ENCODE measurements at regions of chr19 and their contacts with region 1.

Region 1: GRCh38 chr19:51441410-51442390 is 16.6 kb downstream of the SIGLEC8 start:
- DNase-seq: peak; percentile 87
- H3K4me3 Mint-ChIP-seq: peak overlapping the region; percentile 88
- H3K27ac Mint-ChIP-seq: peak overlapping the region; percentile 91
- H3K4me1 Mint-ChIP-seq: peaks cover 68% of the 10 kb centered on the region
- H3K27me3 Mint-ChIP-seq: no peaks in the 10 kb centered on the region

Region 2: GRCh38 chr19:51259348-51260245 is 182.1 kb before region 1 on chr19:
- intact Hi-C with region 1: loop called (anchors 2 kb)
- DNase-seq: peak; percentile 61
- H3K4me3 Mint-ChIP-seq: no peak overlapping the region
- H3K27ac Mint-ChIP-seq: no peak overlapping the region
- H3K4me1 Mint-ChIP-seq: peaks cover 44% of the 10 kb centered on the region
- H3K27me3 Mint-ChIP-seq: peaks cover 26% of the 10 kb centered on the region

Region 3: DNA sequence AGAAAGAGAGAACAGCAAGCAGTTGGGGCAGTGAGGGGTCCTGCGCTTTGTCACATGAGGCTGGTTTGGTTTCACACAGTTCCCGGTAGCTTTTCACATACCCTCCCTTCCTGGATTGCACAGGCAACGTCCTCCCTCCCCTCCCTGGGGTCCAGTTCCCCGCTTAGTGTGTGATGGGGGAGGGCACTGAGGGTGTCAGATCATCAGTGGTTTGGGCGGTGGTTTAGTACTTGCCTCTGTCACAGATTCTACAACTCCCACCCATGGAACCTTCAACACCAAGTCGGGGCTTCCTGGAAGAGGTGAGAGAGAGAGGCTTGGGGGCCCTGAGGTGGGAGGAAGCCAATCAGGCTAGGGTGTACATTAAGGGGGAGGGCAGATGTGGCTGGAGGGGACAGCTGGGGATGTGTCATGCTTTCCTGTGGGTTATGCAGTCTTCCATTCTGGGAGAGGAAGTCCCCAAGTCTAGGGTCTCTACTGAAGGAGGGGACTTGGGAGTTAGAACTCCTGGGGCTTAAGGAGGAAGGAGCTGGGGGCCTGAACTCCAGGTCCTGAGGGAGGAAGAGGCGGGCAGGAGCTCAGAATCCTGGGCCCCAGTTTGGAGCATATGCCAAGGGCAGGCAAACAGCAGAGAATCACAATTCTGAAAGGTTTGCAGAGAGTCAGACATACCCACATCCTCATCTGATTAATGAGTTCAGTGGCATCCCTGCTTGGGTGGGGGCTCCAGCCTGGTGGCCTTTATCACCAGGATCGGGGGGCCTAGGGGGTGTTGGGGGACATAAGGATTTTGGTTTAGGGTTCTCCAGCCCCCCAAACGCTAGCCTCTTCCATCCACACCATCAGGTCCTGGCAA is 68.8 kb before region 1 on chr19 and contains the start of gene NKG7:
- intact Hi-C with region 1: loop called (anchors 2 kb)
- DNase-seq: peak; percentile 72
- H3K4me3 Mint-ChIP-seq: peak within 1 kb of the TSS; percentile 84
- H3K27ac Mint-ChIP-seq: peak within 1 kb of the TSS; percentile 94
- H3K4me1 Mint-ChIP-seq: peaks cover 65% of the 10 kb centered on the region
- H3K27me3 Mint-ChIP-seq: no peaks in the 10 kb centered on the region
- total RNA-seq, gene NKG7: 332 and 342 TPM in 2 replicates

Region 4: DNA sequence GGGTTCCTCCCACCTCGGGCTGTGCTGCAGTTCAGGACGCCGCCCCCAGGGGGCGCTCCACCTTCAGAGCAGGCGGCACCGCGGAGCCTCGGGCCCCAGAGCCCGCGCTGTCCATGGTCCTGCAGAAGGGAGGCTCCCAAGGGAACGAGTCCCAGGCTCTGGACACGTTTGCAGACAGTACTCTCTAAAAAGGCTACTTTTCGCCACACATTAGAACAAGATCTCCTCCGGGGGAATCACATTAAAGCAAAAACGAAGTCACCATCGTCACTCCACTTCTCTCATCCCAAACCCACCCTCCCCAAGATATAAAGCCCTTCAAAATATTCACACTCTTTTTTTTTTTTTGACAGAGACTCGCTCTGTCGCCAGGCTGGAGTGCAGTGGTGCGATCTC is 19.6 kb before region 1 on chr19:
- intact Hi-C with region 1: loop called (anchors 2 kb)
- DNase-seq: peak; percentile 80
- H3K4me3 Mint-ChIP-seq: peak overlapping the region; percentile 26
- H3K27ac Mint-ChIP-seq: no peak overlapping the region
- H3K4me1 Mint-ChIP-seq: peaks cover 22% of the 10 kb centered on the region
- H3K27me3 Mint-ChIP-seq: no peaks in the 10 kb centered on the region

Region 5: GRCh38 chr19:51489113-51489512 is 47.4 kb after region 1 on chr19:
- intact Hi-C with region 1: loop called (anchors 1 kb)
- DNase-seq: no peak
- H3K4me3 Mint-ChIP-seq: peak overlapping the region; percentile 3
- H3K27ac Mint-ChIP-seq: peak overlapping the region; percentile 82
- H3K4me1 Mint-ChIP-seq: peaks cover 25% of the 10 kb centered on the region
- H3K27me3 Mint-ChIP-seq: no peaks in the 10 kb centered on the region

Region 6: DNA sequence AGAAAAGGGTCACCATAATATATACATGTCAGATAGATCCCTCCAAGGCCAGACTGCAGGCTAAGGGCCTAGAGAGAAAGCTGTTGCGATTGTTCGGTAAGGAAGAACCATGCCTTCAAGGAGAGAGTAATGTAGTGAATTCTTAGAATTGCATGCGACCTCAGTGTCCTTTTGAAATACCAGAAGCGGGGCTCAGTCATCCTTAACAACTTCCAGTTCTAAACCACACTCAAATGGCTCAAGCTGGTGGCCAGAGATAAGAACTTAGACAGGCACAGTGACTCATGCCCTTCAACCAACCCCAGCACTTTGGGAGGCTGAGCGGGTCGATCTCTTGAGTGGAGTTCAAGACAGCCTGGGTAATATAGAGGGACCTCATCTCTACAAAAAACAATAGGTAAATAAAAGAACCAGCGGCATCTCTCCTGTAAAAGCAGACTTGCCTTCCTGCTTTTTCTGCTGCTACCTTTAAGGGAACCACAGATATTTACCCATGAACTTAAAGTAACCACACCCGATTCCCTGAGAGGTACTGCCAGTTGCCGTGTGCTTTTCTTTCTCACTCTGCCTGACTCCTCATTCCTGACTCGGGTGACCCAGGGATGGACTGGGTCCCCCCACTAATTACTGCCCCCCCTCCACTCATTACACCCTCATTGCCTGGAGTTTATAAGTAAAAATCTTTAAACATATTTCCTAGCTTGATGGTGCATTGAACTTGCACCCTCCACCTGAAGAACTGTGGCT is 105.1 kb after region 1 on chr19:
- intact Hi-C with region 1: loop called (anchors 2 kb)
- DNase-seq: no peak
- H3K4me3 Mint-ChIP-seq: peak overlapping the region; percentile 28
- H3K27ac Mint-ChIP-seq: peak overlapping the region; percentile 64
- H3K4me1 Mint-ChIP-seq: peaks cover 58% of the 10 kb centered on the region
- H3K27me3 Mint-ChIP-seq: peaks cover 9% of the 10 kb centered on the region

Measured in activated T-helper 2 cell treated with anti-CD3 and anti-CD28 coated beads, Interferon-gamma antibody, Interleukin-2, Interleukin-4, amounts not matched to agents 10 μg/mL and 5 μg/mL and 100 μg/mL, durations not matched to agents 14 hours and 24 hours and 36 hours (primary cell).